ENCODE measurements at regions of chr7 and their contacts with region 1.

Region 1: GRCh38 chr7:68143345-68143744 is 1146.7 kb downstream of the TYW1 start:
- DNase-seq: no peak
- H3K4me3 ChIP-seq: no peak overlapping the region
- H3K27ac ChIP-seq: no peak overlapping the region
- H3K4me1 ChIP-seq: no peaks in the 10 kb centered on the region
- CTCF ChIP-seq: no peak

Region 2: DNA sequence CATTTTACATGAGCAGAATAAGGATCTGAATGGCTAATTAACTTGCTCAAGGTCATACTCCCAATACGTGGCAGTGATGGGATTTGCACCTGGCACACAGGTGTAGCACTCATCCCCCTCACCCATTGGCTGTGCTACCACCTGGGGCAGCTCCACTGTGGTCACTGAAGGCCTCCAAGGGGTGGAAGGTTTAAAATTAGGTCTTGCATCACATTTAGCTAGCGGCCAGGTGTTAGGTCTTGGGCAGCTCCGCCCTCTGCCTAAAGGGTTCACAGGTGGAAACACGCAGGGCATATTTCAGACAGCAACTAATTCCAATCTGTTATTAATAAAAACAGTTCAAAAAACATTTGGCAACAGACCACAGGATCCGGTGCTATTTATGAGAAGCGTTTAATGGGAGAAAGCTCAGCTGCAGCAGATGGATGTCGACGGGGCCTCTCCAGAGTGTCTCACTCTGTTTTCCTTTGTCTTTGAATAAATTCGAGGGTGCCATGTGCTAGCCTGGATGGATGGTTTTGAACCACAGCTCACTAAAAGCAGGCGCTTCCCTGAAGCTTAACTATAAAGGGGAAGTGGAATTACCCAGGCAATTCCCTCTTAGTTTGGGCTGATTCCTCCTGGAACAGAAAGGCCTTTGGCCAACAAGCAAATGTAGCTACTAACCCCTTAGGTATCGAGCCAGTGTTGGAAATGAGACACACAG is 129.2 kb before region 1 on chr7:
- CTCF ChIA-PET with region 1: no interaction called
- POLR2A ChIA-PET with region 1: no interaction called
- intact Hi-C with region 1: no loop called
- DNase-seq: no peak
- H3K4me3 ChIP-seq: no peak overlapping the region
- H3K27ac ChIP-seq: no peak overlapping the region
- H3K4me1 ChIP-seq: no peaks in the 10 kb centered on the region
- CTCF ChIP-seq: no peak

Region 3: GRCh38 chr7:68107261-68107660 is 36.1 kb before region 1 on chr7:
- CTCF ChIA-PET with region 1: no interaction called
- POLR2A ChIA-PET with region 1: no interaction called
- intact Hi-C with region 1: no loop called
- DNase-seq: no peak
- H3K4me3 ChIP-seq: no peak overlapping the region
- H3K27ac ChIP-seq: no peak overlapping the region
- H3K4me1 ChIP-seq: no peaks in the 10 kb centered on the region
- CTCF ChIP-seq: no peak

Region 4: GRCh38 chr7:68706291-68706690 is 562.9 kb after region 1 on chr7:
- CTCF ChIA-PET with region 1: no interaction called
- POLR2A ChIA-PET with region 1: interaction called, 10 read pairs
- intact Hi-C with region 1: no loop called
- DNase-seq: no peak
- H3K4me3 ChIP-seq: no peak overlapping the region
- H3K27ac ChIP-seq: no peak overlapping the region
- H3K4me1 ChIP-seq: no peaks in the 10 kb centered on the region
- CTCF ChIP-seq: no peak